ENCODE measurements at regions of chr2 and their contacts with region 1.

Region 1: DNA sequence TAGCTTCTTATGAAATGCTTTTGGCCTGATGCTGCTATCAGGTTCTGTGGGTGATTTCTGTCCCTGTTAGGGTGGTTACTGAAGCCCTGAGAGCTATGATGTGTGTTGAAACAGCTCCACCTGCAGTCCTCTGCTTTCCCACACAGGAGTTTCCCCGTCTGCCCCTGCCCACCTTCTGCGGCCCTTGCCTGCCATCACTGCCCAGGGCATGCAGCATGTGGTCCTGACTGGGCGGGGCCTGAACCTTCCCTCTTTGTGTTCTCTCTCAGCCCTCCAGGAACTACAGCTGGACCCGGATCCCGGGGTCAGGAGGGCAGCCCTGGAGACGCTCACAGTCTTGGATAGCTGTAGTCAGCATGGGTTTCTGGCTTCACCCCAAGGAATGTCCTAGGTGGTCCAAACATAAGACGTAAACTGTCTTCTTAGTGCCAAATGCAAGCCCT is 21.4 kb downstream of the HJURP start:
- DNase-seq: peak; percentile 54
- ATAC-seq: peak; percentile 77
- H3K4me3 ChIP-seq: no peak overlapping the region
- H3K27ac ChIP-seq: no peak overlapping the region
- H3K4me1 ChIP-seq: no peaks in the 10 kb centered on the region
- H3K27me3 ChIP-seq: no peaks in the 10 kb centered on the region
- CTCF ChIP-seq: peak; percentile 60; the same call in 1 of the 2 replicates

Region 2: DNA sequence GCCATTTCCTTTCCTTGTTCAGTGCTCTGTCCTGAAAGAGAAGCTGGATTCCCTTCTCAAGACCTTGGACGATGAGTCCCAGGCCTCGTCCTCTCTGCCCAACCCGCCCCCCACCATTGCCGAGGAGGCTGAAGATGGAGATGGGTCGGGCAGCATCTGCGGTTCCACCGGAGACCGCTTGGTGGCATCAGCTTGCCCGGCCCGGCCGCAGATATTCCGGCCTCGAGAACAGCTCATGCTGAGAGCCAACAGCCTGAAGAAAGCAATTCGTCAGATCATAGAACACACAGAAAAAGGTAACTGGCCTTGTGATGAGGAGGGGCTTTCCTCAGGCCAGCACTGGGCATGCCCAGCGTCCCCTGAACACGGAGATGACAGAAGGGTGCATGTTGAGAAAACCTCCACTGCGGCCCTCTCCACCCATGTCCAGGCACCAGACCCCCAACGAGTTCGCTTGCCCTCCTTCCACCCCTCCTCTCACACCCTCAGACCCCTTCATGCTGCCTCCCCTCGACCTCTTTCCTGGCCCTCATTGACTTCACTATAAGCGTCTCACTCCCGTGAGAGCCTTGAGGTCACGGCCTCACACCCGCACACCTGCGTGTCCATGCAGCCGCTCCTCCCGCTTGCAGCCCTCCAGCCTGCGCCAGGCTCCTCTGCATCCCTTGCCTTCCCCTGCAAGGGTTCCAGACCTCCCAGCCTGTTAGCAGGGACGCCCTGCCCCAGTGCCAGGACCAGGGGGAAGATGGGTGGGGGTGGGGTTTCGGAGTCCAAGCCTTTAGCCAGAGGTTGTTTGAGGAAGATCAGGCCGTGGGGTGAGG is 383.6 kb before region 1 on chr2:
- CTCF ChIA-PET with region 1: interaction called, 12 read pairs
- POLR2A ChIA-PET with region 1: interaction called, 3 read pairs
- intact Hi-C with region 1: no loop called
- DNase-seq: peak; percentile 53
- ATAC-seq: peak; percentile 83
- H3K4me3 ChIP-seq: no peak overlapping the region
- H3K27ac ChIP-seq: no peak overlapping the region
- H3K4me1 ChIP-seq: 0 out of 2 replicates have a peak, but pooled peaks cover 3% of the 10 kb centered on the region
- H3K27me3 ChIP-seq: no peaks in the 10 kb centered on the region
- CTCF ChIP-seq: peak; percentile 68

Region 3: GRCh38 chr2:233711312-233712008 is 121.4 kb before region 1 on chr2:
- CTCF ChIA-PET with region 1: no interaction called
- POLR2A ChIA-PET with region 1: no interaction called
- intact Hi-C with region 1: loop called (anchors 5 kb)
- DNase-seq: peak; percentile 86
- ATAC-seq: peak; percentile 69
- H3K4me3 ChIP-seq: no peak overlapping the region
- H3K27ac ChIP-seq: no peak overlapping the region
- H3K4me1 ChIP-seq: peaks cover 38% of the 10 kb centered on the region
- H3K27me3 ChIP-seq: no peaks in the 10 kb centered on the region
- CTCF ChIP-seq: peak; percentile 92

Region 4: GRCh38 chr2:233871432-233871831 is 38.5 kb after region 1 on chr2:
- CTCF ChIA-PET with region 1: no interaction called
- POLR2A ChIA-PET with region 1: no interaction called
- intact Hi-C with region 1: no loop called
- DNase-seq: no peak
- ATAC-seq: no peak
- H3K4me3 ChIP-seq: no peak overlapping the region
- H3K27ac ChIP-seq: no peak overlapping the region
- H3K4me1 ChIP-seq: no peaks in the 10 kb centered on the region
- H3K27me3 ChIP-seq: no peaks in the 10 kb centered on the region
- CTCF ChIP-seq: no peak